Activated CD4-positive, alpha-beta memory T cell treated with anti-CD3 and anti-CD28 coated beads, Interleukin-2, amount 10 ng/mL, durations not matched to agents 7 days and 5 days (primary cell): ENCODE measurements at regions of chr13 and their contacts with region 1.

Region 1: DNA sequence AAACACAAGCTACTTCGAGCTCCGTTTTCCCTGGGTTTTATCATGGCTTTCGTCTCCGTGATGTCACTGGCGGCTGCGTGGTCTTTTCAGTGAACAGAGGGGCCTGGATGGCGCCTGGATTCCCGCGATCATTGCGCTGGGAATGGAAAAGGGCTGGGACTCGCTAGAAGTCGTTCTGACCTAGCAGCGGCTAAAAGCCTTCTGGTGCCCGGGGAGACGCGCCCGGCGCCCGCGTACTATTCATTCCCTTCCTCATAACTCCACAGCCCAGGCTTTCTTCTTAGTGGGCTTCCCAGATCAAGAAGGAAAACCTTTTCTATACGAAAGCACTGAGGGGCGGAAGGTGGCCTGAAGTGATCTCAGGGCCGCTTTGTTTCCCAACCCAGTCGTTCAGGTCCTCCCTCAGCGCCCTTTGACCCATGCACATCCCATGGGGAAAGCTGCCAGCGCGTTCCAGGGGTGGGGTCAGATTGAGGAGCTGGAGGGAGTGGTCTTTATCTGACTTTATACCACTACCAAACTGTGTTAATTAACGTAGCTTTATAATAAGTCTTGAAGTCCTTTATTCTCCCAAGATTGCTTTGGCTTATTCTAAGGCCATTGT is 96.6 kb downstream of the ELF1 start:
- DNase-seq: no peak
- H3K4me3 Mint-ChIP-seq: peak overlapping the region; percentile 41
- H3K27ac Mint-ChIP-seq: peak overlapping the region; percentile 53
- H3K4me1 Mint-ChIP-seq: peaks cover 19% of the 10 kb centered on the region
- H3K27me3 Mint-ChIP-seq: no peaks in the 10 kb centered on the region

Region 2: DNA sequence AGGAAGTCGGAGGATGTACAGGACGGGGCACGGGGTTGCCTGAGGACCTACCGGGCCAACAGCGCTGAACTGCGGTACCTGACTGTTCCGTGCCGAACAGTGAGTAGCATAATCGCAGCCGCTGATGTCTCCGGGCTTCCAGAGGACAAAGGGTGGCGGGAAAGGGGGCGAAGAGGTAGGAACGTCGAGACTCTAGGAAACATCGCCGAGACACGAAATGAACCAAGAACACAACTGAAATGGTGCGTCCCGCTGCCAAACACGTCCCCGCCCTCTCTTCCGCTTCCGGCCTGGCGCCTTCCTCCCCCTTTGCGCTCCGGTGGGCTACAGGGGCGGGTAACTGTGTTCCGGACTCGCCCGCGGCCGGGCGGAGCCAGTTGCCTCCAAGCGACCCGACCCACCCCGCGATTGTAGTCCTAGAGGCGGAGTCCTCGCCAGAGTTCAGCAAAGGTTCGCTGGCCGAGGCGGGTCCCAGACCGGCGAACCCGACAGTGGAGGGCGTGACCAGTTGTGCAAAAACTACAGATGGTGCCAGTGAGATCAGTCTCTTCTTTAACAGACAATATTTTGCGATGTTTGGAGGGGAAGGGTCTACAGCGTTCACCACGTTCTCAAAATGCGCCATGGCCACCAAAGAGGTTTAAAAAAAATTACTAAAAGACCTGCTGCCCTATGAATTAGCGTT is 151.5 kb before region 1 on chr13 and contains the start of gene MRPS31:
- CTCF ChIA-PET with region 1: interaction called, 3 read pairs
- POLR2A ChIA-PET with region 1: interaction called, 13 read pairs
- DNase-seq: peak; percentile 97
- H3K4me3 Mint-ChIP-seq: peak within 1 kb of the TSS; percentile 94
- H3K27ac Mint-ChIP-seq: peak within 1 kb of the TSS; percentile 94
- H3K4me1 Mint-ChIP-seq: peaks cover 47% of the 10 kb centered on the region
- H3K27me3 Mint-ChIP-seq: no peaks in the 10 kb centered on the region
- total RNA-seq, gene MRPS31: 31.5 to 34.0 TPM

Region 3: DNA sequence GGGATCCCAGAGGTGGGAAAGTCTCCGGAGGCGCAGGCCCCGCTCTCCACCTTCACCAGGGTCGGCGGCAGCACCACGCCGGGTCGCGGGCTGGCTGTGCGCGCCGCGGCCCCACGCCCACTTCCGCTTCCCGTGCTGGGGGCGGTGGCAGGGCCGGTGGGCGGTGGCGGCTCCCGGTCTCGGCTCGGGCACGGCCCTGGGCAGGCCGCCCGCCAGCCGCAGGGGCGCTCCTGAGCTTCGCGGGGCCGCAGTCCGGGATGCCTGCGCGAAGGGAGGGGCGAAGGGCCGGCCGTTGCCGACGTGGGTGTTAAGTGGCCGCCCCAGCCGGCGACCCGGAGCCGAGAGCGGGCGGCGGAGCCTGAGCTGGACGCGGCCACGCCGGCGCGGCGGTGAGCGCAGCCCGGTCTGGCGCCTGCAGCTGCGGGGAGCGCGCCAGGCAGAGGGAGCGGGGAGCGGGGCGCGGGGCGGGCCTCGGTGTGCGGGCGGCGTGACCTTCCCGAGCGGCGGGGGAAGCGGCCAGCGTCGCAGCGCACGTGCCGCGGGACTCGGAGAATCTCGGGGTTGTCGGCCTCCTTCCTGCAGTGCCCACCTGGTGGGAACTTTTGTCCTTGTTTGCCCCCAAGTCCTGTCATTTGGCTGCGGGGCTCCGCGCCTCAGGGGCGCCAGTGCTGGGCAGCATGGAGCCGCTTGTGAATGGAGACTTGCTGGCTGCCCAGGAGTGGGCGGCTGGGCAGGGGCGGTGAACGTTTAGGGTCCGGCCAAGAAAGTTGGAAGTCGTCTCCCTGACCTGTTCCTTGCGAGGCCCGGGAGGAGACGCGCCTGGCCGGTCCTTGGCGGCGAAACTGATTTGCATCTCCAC is 133.0 kb before region 1 on chr13 and contains the start of gene SLC25A15:
- CTCF ChIA-PET with region 1: interaction called, 3 read pairs
- POLR2A ChIA-PET with region 1: interaction called, 12 read pairs
- DNase-seq: peak; percentile 76
- H3K4me3 Mint-ChIP-seq: peak within 1 kb of the TSS; percentile 75
- H3K27ac Mint-ChIP-seq: peak within 1 kb of the TSS; percentile 68
- H3K4me1 Mint-ChIP-seq: peaks cover 36% of the 10 kb centered on the region
- H3K27me3 Mint-ChIP-seq: no peaks in the 10 kb centered on the region
- total RNA-seq, gene SLC25A15: 8.2 to 9.8 TPM

Region 4: DNA sequence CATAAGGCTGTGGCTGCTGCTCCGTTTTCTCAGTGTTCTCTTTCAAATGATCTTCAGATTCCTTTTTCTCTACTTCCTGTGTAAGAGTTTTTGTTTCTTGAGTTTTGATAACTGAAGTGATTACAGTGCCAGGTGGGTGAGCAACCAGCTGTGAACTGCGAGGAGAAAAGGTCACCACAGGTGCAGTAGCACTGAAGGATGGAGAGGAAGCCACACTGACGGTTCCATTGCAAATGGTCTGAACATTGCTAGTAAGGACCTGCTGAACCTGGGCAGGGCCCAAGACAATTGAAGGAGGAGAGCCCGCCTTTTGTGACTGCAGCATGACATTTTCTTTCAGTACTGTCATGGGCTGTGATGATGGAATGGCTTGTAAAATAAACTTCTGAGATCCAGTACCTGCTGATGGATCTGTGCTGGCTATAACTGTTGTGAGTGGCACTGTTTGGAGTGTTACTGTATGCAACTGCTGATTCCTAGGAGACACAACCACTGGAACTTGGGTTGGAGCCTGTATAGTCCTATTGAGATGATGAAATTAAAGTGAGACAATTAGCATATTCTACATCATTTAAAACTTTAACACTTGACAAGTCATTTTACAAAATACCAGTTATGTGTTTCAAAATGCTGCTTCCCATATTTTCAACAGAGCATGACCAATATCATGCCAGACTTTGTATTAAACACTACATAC is 11.1 kb after region 1 on chr13:
- CTCF ChIA-PET with region 1: interaction called, 10 read pairs
- POLR2A ChIA-PET with region 1: interaction called, 9 read pairs
- DNase-seq: no peak
- H3K4me3 Mint-ChIP-seq: no peak overlapping the region
- H3K27ac Mint-ChIP-seq: peak overlapping the region; percentile 9
- H3K4me1 Mint-ChIP-seq: peaks cover 12% of the 10 kb centered on the region
- H3K27me3 Mint-ChIP-seq: no peaks in the 10 kb centered on the region

Region 5: DNA sequence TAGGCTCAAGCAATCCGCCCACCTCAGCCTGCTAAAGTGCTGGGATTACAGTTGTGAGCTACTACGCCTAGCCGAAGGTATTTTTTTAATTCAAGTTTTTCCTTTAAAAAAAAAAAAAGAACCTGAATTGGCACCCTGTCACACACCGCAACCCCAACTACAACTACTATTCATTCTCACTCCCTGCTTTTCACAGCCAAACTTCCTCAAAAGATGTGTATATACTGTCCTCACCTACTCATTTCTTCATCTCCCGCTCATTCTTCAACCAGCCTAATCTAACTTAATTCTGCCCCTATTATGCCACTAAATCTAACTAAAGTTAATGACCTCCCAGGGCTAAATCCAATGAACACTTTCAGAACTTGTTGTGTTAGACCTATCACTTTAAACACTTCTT is 126.1 kb after region 1 on chr13:
- CTCF ChIA-PET with region 1: no interaction called
- POLR2A ChIA-PET with region 1: no interaction called
- DNase-seq: no peak
- H3K4me3 Mint-ChIP-seq: no peak overlapping the region
- H3K27ac Mint-ChIP-seq: no peak overlapping the region
- H3K4me1 Mint-ChIP-seq: peaks cover 17% of the 10 kb centered on the region
- H3K27me3 Mint-ChIP-seq: no peaks in the 10 kb centered on the region

Region 6: DNA sequence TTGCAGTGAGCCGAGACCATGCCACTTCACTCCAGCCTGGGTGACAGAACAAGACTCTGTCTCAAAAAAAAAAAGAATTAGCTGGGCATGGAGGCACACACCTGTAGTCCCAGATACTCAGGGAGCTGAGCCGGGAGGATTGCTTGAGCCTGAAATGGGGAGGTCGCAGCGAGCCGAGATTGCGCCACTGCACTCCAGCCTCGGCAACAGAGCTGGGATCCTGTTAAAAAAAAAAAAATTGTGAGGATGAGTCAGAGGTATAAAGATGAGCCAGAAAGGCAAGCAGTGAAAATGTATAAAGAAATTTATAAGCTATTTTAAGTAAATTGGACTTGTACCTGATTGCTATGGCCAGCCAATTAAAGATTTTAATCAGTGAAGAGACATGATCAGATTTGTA is 188.9 kb after region 1 on chr13:
- CTCF ChIA-PET with region 1: no interaction called
- POLR2A ChIA-PET with region 1: no interaction called
- DNase-seq: no peak
- H3K4me3 Mint-ChIP-seq: no peak overlapping the region
- H3K27ac Mint-ChIP-seq: no peak overlapping the region
- H3K4me1 Mint-ChIP-seq: no peaks in the 10 kb centered on the region
- H3K27me3 Mint-ChIP-seq: no peaks in the 10 kb centered on the region